Activated naive CD4-positive, alpha-beta T cell treated with anti-CD3 and anti-CD28 coated beads, Interleukin-2, amount 10 ng/mL, durations not matched to agents 7 days and 5 days (primary cell): ENCODE measurements at regions of chr2 and their contacts with region 1.

Region 1: GRCh38 chr2:219029829-219030165 is 11.5 kb downstream of the CFAP65 start:
- DNase-seq: peak; percentile 83
- H3K4me3 Mint-ChIP-seq: no peak overlapping the region
- H3K27ac Mint-ChIP-seq: no peak overlapping the region
- H3K4me1 Mint-ChIP-seq: no peaks in the 10 kb centered on the region
- H3K27me3 Mint-ChIP-seq: peaks cover 40% of the 10 kb centered on the region

Region 2: DNA sequence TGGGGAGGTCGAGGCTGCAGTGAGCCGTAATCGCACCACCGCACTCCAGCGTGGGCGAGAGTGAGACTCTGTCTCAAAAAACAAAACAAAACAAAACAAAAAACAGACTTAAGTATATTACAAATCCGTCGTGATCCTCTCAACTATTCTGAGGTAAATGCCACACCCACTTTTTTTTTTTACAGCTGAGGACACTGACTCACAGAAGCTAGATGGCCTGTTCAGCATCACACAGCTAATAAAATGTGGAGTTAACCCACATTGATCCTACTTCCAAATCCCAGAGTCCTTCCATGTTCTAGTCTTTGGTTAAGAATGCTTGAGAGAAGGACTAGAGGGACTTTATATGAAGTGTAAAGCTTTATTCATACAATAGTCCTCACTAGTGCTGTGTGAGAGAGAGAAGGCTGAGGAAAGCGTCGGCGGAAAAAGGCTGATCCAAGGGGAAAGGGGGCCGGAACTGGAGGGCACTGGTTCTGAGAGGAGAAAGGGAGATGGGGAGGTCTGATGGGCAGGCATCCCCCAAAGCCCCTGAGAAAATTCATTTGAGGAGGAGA is 358.6 kb before region 1 on chr2:
- CTCF ChIA-PET with region 1: no interaction called
- DNase-seq: no peak
- H3K4me3 Mint-ChIP-seq: peak overlapping the region; percentile 96
- H3K27ac Mint-ChIP-seq: peak overlapping the region; percentile 80
- H3K4me1 Mint-ChIP-seq: peaks cover 24% of the 10 kb centered on the region
- H3K27me3 Mint-ChIP-seq: peaks cover 6% of the 10 kb centered on the region

Region 3: GRCh38 chr2:219010162-219010756 is 19.5 kb before region 1 on chr2:
- CTCF ChIA-PET with region 1: interaction called, 11 read pairs
- DNase-seq: peak; percentile 42
- H3K4me3 Mint-ChIP-seq: no peak overlapping the region
- H3K27ac Mint-ChIP-seq: no peak overlapping the region
- H3K4me1 Mint-ChIP-seq: no peaks in the 10 kb centered on the region
- H3K27me3 Mint-ChIP-seq: peaks cover 81% of the 10 kb centered on the region

Region 4: DNA sequence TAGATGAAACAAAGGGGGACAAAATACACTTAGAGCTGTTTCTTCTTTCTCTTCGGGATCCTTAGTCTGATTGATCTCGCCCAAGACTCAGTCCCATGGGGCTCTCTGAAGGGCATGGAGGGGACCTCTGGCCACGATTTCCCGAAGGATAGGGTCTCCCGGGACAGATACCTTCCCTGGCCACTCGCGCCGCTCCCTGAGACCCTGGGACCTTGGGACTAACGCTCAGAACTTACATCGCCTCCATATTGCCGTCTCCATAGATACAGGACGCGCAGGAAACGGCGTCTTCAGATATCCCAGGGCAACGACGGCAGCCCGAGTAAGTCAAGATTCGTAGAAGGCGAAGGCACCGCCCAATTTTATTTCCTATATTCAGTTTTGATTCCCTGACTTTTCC is 11.5 kb after region 1 on chr2 and contains the start of gene CFAP65:
- CTCF ChIA-PET with region 1: interaction called, 16 read pairs
- DNase-seq: peak; percentile 59
- H3K4me3 Mint-ChIP-seq: peak within 1 kb of the TSS; percentile 42
- H3K27ac Mint-ChIP-seq: no peak within 1 kb of the TSS
- H3K4me1 Mint-ChIP-seq: peaks cover 9% of the 10 kb centered on the region
- H3K27me3 Mint-ChIP-seq: peaks cover 59% of the 10 kb centered on the region